Esophagus muscularis mucosa (tissue), 4 donors: ENCODE measurements at regions of chr17 and their contacts with region 1.

Region 1: DNA sequence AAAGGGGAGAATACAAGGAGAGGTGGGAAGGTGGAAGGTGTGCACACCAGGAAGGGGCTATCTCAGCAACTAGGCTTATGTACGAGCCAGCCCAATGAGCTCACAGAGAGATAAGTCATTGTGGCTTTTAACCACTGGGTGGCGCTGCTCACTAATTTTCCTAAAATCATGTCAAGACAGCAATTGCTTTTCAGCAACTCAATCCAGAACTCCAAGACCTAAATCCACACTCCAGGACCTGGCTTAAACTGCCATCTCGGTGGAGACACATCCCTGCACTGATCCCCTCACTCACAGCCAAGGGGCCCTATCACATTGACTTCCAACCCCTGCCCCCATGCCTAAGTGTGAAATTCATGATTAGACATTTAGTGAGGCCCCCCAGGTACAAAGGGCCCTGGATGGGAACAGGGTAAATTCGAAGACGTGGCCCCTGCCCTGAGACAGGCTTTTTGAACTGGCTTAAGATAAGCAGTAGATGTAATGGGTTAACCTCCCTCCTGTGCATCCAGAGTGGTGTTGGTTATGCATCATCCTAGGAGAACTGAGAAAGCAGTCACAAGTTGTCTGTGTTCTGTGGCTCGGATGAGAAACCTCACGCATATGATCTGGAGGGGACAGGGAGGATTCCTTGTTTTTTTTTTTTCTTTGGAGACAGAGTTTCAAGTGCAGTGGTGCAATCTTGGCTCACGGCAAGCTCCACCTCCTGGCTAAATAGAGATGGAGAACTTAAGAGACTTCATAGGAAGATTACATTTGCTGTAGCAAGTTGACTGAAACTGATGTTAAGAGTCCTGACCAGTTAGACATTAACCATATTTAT is 11.5 kb downstream of the CCL16 start:
- DNase-seq: no peak
- H3K4me3 ChIP-seq: no peak overlapping the region
- H3K27ac ChIP-seq: no peak overlapping the region
- H3K4me1 ChIP-seq: peaks cover 0 to 21% (median 15%) of the 10 kb centered on the region in 4 donors
- H3K27me3 ChIP-seq: no peaks in the 10 kb centered on the region
- CTCF ChIP-seq: peak; percentile 64 to 79 (median 76)
- EP300 ChIP-seq: no peak
- POLR2A ChIP-seq: no peak

Region 2: GRCh38 chr17:36072431-36073121 is 102.8 kb after region 1 on chr17:
- intact Hi-C with region 1: loop called (anchors 10 kb)
- DNase-seq: no peak
- H3K4me3 ChIP-seq: no peak overlapping the region
- H3K27ac ChIP-seq: no peak overlapping the region
- H3K4me1 ChIP-seq: no peaks in the 10 kb centered on the region
- H3K27me3 ChIP-seq: peaks cover 0 to 7% (median 0%) of the 10 kb centered on the region in 4 donors
- CTCF ChIP-seq: peak; percentile 40 to 54 (median 46)
- EP300 ChIP-seq: no peak
- POLR2A ChIP-seq: no peak

Region 3: DNA sequence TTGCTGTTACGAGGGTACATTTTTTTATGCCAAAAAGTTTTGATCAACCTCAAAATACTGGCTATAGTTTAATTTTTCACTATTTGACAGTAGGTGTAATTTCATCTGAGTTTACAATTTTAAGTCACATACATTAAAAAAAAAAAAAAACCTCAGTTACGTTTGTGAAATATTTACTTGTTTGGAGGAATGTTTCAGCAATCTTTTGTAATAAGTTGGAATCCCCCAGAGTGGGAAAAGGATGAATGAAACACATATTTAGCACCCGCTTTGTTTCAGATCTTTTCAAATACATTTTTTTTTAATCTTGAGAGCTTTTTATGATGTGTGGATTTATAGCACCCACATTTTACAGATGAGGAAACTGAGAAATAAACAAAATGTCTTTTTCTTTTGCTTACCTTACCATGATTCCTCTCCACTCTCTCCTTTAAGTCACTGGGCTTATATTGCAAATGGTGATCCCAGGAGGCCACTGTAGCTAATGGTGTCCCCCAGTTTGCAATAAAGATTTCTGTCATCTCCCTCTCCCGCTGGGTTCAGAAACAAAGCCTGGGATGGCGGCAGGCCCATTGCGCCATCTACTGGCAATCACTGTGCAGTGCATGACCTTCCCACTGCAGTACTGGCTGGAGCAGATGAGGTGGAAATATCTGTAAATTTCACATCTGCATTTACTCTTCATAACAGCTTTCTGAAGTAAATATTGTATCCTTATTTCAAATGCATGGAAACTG is 179.0 kb after region 1 on chr17:
- intact Hi-C with region 1: loop called (anchors 2 kb)
- DNase-seq: peak; percentile 97
- H3K4me3 ChIP-seq: no peak overlapping the region
- H3K27ac ChIP-seq: no peak overlapping the region
- H3K4me1 ChIP-seq: peaks cover 5 to 11% (median 10%) of the 10 kb centered on the region in 4 donors
- H3K27me3 ChIP-seq: peaks cover 0 to 13% (median 2%) of the 10 kb centered on the region in 4 donors
- CTCF ChIP-seq: peak; percentile 89 to 99 (median 91)
- EP300 ChIP-seq: no peak
- POLR2A ChIP-seq: no peak

Region 4: GRCh38 chr17:36486204-36487194 is 516.7 kb after region 1 on chr17 and contains the start of gene ZNHIT3:
- intact Hi-C with region 1: loop called (anchors 2 kb)
- DNase-seq: peak; percentile 97
- H3K4me3 ChIP-seq: peak within 1 kb of the TSS; percentile 81 to 99 (median 96)
- H3K27ac ChIP-seq: peak within 1 kb of the TSS; percentile 83 to 90 (median 86)
- H3K4me1 ChIP-seq: peaks cover 22 to 51% (median 41%) of the 10 kb centered on the region in 4 donors
- H3K27me3 ChIP-seq: peaks cover 0 to 7% (median 0%) of the 10 kb centered on the region in 4 donors
- CTCF ChIP-seq: peak in 1 of 3 experiments; percentile 24
- EP300 ChIP-seq: no peak
- POLR2A ChIP-seq: no peak
- total RNA-seq, gene ZNHIT3: 18.4 to 35.1 (median 25.8) TPM